Common myeloid progenitor, CD34-positive (primary cell): ENCODE measurements at regions of chr7 and their contacts with region 1.

Region 1: DNA sequence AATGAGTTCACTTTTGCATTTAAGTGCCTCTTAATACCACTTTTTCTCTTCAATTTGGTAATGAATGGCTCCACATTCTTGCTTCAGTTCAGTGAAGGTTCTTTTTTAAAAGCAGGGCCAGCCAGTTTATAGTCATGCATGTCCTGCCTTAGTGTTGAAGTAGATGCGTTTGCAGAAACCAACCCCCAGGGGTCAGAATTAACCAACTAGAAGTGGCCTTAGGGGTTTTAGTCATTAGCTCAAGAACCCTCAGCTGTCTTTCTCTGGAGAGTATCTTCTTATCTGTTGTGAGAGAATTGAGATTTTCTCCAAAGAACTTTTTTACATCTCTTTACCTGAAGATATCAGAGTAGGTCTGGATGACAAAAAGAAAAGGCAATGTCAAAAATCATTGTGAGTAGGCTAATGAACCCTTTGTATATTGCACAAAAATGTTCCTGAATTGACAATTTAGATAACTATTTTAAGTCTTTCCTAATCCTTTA is 82.2 kb downstream of the PIK3CG start:
- DNase-seq: peak; percentile 81 to 90 (median 84)
- H3K4me3 ChIP-seq: no peak overlapping the region
- H3K27ac ChIP-seq: no peak overlapping the region
- H3K4me1 ChIP-seq: no peaks in the 10 kb centered on the region
- H3K27me3 ChIP-seq: no peaks in the 10 kb centered on the region

Region 2: DNA sequence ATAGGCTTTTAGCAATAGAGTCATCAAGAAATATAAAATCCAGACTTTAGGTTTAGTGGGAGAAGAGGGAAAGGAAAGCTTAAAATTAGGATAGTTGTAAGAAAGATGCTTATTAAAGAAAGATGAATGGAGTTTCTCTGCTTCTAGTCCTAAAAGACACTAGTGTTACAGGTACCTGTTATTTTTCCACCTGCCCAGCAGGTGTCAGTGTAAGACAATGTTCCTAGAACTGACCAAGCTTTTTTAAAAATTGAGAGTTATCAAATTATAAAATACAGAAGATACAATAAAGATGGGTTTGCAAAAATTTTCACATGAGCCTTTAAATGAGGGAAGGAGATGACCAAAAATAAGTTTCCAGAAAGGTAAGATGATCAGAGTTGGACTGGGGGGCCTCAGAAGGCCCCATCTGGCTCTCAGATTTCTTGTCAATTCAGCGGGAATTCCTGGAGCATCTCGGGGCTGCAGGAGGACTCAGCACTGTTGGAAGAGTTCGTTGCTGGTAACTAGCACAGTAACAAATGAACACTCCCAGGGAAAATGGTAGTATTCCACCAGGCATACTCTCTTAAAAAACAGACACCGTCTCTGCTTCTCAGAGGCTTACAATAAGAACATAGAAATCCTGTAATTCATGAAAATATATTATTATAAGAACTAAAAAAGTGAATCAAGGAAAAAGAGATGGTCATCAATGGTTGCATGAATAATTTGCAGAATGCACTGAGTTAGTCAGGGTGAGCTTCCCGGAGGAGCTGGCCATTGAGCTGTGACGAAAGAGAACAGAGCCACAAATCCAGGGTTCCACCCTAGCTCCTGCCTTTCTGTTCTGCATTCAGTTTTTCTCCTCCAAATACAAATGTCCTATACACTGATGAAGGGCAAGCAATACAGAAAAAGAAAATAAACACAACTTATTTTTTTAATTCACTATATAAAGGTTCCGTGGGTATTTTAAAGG is 154.0 kb before region 1 on chr7:
- CTCF ChIA-PET with region 1: interaction called, 28 read pairs
- POLR2A ChIA-PET with region 1: interaction called, 3 read pairs
- DNase-seq: peak; percentile 49 to 69 (median 50)
- H3K4me3 ChIP-seq: no peak overlapping the region
- H3K27ac ChIP-seq: no peak overlapping the region
- H3K4me1 ChIP-seq: peaks cover 0 to 10% (median 0%) of the 10 kb centered on the region in 4 experiments
- H3K27me3 ChIP-seq: no peaks in the 10 kb centered on the region

Region 3: GRCh38 chr7:106959753-106960152 is 12.5 kb after region 1 on chr7:
- CTCF ChIA-PET with region 1: interaction called, 21 read pairs
- POLR2A ChIA-PET with region 1: no interaction called
- DNase-seq: no peak
- H3K4me3 ChIP-seq: no peak overlapping the region
- H3K27ac ChIP-seq: no peak overlapping the region
- H3K4me1 ChIP-seq: no peaks in the 10 kb centered on the region
- H3K27me3 ChIP-seq: no peaks in the 10 kb centered on the region